ENCODE measurements at regions of chr15 and their contacts with region 1.

Region 1: DNA sequence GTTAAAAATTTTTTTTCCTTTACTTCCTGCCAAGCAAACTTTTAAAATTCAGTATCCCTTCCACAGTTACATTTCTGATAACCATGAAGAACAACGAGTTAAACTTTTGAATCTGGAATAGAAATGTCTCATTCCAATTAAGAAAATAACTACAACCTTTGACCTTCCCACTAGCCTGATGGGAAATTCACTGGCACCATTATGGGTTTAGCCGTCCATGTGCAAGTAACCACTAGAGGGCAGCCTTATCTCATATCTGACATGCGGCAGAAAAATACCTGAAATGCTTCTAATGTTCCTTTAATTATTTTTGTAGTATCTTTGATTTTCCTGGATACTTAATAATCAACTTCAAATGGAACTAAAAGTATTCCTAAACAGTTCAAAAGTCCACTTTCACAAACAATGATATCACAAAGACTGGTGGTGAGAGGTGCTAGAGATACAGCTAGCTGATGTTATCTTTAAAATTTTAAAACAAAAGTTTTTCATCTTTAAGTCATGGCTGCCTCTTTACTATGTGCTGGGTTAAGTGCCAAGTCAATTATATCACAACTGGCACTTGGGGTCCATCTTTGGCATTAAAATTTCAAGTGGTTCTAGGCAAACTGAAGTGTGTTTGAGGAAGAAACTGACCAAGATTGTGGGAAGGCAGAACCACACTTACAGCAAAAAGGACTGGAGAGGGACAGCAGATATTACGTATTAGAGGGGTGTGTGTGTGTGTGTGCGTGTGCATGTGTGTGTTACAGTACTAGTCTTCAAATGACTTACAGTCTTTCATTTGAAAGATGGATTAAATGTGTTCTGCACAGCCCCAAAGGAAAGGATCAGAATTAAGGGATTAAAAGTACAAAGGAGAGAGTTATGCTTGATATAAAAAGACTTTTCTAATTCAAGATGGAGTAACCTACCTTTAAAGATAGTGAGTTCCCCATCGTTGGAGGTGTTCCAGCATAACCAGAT is 107.1 kb upstream of the ICE2 start:
- DNase-seq: peak; percentile 74
- H3K4me3 ChIP-seq: no peak overlapping the region
- H3K27ac ChIP-seq: no peak overlapping the region
- H3K4me1 ChIP-seq: peaks cover 2% of the 10 kb centered on the region
- H3K27me3 ChIP-seq: peaks cover 43% of the 10 kb centered on the region
- CTCF ChIP-seq: peak; percentile 93

Region 2: GRCh38 chr15:60916679-60917460 is 330.8 kb after region 1 on chr15:
- CTCF ChIA-PET with region 1: interaction called, 12 read pairs
- POLR2A ChIA-PET with region 1: no interaction called
- intact Hi-C with region 1: loop called (anchors 2 kb)
- DNase-seq: peak; percentile 84
- H3K4me3 ChIP-seq: no peak overlapping the region
- H3K27ac ChIP-seq: no peak overlapping the region
- H3K4me1 ChIP-seq: peaks cover 8% of the 10 kb centered on the region
- H3K27me3 ChIP-seq: no peaks in the 10 kb centered on the region
- CTCF ChIP-seq: peak; percentile 87

Region 3: DNA sequence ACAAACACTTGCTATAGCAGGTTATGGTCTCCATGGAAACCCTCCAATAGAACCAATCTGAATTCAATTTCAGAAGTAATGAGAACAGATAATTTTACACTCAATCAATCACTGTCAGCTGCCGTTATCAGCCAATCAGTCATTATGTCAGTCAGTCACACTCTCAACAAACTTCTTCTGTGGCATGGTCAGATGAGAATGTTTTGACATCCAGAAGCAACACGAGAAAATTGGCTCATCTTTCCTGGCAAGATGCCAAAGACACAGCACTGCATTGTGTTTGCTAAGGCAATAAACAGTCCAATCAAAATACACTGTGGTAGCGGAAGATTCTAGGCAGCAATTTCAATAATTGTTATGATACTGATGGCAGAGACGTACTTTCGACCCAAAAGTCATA is 452.4 kb after region 1 on chr15:
- CTCF ChIA-PET with region 1: no interaction called
- POLR2A ChIA-PET with region 1: interaction called, 3 read pairs
- intact Hi-C with region 1: loop called (anchors 10 kb)
- DNase-seq: peak; percentile 28
- H3K4me3 ChIP-seq: no peak overlapping the region
- H3K27ac ChIP-seq: no peak overlapping the region
- H3K4me1 ChIP-seq: peaks cover 10% of the 10 kb centered on the region
- H3K27me3 ChIP-seq: no peaks in the 10 kb centered on the region
- CTCF ChIP-seq: no peak